HepG2 (cell line): ENCODE measurements at regions of chr12 and their contacts with region 1.

Region 1: DNA sequence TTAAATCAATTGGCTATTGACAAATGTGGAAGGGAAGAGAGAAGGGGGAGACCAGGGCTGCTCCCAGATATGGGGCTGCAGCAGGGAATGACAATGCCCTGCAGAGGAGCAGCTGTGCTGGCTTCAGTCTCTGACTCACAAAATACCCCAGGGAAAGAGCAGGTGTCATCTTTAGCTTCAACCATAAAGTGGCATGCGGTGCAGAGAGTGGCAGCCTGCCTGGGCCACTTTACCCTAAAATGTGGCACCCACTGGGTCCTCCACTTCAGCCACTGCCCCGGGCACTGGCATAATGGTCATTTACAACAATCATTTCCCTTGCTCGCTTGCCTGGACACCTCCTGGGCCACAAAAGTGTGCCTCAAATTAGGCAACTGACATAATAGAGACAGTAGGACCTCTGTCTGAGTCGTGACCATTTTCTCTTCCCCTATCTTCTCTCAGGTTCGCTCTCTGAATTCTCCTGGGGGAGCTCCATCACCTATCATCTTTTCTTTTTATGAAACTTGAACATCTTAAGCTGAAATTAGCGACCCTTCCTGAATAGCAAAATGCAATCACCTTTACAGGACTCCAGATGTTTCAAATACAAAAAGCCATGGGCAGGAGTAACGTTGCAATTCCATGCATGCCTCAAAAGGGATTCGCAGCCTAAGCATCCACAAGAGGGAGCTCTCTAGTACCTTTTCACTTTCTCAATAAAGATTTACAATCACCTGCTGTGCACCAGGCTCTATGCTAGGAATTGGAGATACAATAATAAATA is 179.9 kb upstream of the ATF7IP start:
- DNase-seq: peak; percentile 26
- ATAC-seq: peak; percentile 79
- H3K4me3 ChIP-seq: no peak overlapping the region
- H3K27ac ChIP-seq: no peak overlapping the region
- H3K4me1 ChIP-seq: no peaks in the 10 kb centered on the region
- H3K27me3 ChIP-seq: no peaks in the 10 kb centered on the region
- CTCF ChIP-seq: peak; percentile 65
- EP300 ChIP-seq: no peak
- POLR2A ChIP-seq: no peak
- RAD21 ChIP-seq: no peak

Region 2: DNA sequence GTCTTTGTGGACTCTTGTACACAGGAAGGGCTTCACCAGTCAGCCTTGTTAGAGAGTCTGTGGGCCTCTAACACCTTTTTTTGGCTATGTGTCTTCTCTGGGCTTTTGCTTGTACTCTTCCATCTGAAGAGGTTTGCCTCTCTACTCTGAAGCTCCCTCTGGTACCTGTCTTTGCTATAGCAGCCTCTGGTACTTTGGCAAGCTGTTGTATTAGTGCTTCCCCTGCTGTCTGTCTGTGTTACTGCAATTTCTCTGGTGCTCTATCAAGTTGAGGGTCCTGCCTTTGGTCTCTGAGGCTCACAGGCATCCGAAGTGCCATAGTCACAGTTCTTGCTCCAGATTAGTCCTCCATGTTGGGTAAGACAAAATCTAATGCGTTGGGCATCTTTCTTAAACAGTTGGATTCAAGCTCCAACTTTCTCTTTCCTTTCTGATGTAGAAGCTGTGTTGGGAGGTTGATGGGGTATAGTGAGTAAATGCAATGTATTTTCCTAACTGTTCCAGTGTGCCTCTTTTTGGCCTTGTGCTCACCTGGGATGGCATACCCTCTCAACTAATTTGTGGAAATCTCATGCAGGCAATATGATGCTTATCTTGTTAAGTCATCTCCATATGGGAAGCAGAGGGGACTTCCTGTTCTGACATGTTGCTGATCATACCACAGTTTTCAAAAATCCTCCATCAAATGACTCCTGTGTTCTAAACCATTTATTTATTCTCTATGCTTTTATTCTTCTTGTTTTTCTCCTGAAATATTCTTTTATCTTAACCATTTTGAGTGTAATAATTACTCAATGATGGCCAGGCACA is 268.7 kb after region 1 on chr12:
- CTCF ChIA-PET with region 1: interaction called, 4 read pairs
- POLR2A ChIA-PET with region 1: no interaction called
- in situ Hi-C with region 1: no loop called
- intact Hi-C with region 1: loop called (anchors 5 kb)
- DNase-seq: peak; percentile 65
- ATAC-seq: peak; percentile 98
- H3K4me3 ChIP-seq: no peak overlapping the region
- H3K27ac ChIP-seq: no peak overlapping the region
- H3K4me1 ChIP-seq: no peaks in the 10 kb centered on the region
- H3K27me3 ChIP-seq: no peaks in the 10 kb centered on the region
- CTCF ChIP-seq: peak; percentile 70
- EP300 ChIP-seq: no peak
- POLR2A ChIP-seq: no peak
- RAD21 ChIP-seq: peak; percentile 78